B cell (primary cell): ENCODE measurements at regions of chr17 and their contacts with region 1.

Region 1: GRCh38 chr17:77444984-77445759 is 304.4 kb downstream of the SEC14L1 start:
- DNase-seq: peak; percentile 95
- ATAC-seq: peak; percentile 50
- H3K4me3 ChIP-seq: peak overlapping the region in 4 of 5 experiments; percentile 32 to 54 (median 49)
- H3K4me3 Mint-ChIP-seq: peak overlapping the region; percentile 79
- H3K27ac ChIP-seq: peak overlapping the region; percentile 96 to 100
- H3K27ac Mint-ChIP-seq: peak overlapping the region; percentile 98
- H3K4me1 ChIP-seq: peaks cover 89 to 100% of the 10 kb centered on the region in 2 donors
- H3K4me1 Mint-ChIP-seq: peaks cover 87% of the 10 kb centered on the region
- H3K27me3 ChIP-seq: no peaks in the 10 kb centered on the region
- H3K27me3 Mint-ChIP-seq: no peaks in the 10 kb centered on the region
- CTCF ChIP-seq: no peak

Region 2: DNA sequence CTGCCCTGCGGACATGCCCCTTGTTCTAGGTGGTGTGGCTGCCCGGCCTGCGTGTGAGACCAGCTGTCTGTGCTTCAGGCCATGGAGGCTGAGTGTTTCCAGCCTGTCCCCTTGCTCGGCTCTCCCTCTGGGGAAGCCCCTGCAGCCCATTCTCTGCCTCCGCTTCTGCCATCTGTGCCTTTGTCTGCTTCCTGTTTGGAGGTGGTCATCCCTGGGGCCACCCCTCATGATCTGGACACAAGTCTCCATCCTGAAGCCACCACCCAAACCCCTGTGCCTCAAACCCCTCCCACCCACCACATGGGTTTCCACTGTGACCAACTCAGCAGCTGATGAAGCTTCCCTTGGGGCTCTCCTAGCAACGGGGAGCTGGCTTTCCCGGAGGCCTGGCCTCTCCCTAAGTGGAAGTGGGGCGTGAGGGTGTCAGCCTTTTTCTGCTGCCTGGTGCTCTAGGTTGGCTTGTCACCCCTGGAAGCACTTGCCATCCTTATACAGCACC is 119.5 kb before region 1 on chr17:
- CTCF ChIA-PET with region 1: interaction called, 26 read pairs
- POLR2A ChIA-PET with region 1: interaction called, 31 read pairs
- intact Hi-C with region 1: loop called (anchors 1 kb)
- DNase-seq: no peak
- ATAC-seq: peak; percentile 10
- H3K4me3 ChIP-seq: no peak overlapping the region
- H3K4me3 Mint-ChIP-seq: peak overlapping the region; percentile 93
- H3K27ac ChIP-seq: peak overlapping the region; percentile 82 to 87
- H3K27ac Mint-ChIP-seq: peak overlapping the region; percentile 90
- H3K4me1 ChIP-seq: peaks cover 72 to 94% of the 10 kb centered on the region in 2 donors
- H3K4me1 Mint-ChIP-seq: peaks cover 82% of the 10 kb centered on the region
- H3K27me3 ChIP-seq: no peaks in the 10 kb centered on the region
- H3K27me3 Mint-ChIP-seq: no peaks in the 10 kb centered on the region
- CTCF ChIP-seq: no peak

Region 3: DNA sequence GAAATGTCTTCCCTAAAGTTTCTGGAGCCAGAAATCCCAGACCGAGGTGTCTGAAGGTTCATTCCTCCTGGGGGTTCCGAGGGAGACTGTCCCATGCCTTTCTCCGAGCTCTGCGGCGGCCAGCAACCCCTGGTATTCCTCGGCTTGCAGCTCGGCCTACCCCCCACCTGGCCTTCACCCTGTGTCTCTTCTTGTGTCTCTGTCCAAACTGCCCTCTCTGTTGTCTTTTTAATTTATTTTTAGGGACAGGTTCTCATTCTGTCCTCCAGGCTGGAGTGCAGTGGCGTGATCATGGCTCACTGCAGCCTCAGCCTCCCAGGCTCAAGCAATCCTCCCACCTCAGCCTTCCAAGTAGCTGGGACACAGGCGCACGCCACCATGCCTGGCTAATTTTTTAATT is 92.7 kb before region 1 on chr17:
- CTCF ChIA-PET with region 1: no interaction called
- POLR2A ChIA-PET with region 1: no interaction called
- intact Hi-C with region 1: no loop called
- DNase-seq: no peak
- ATAC-seq: no peak
- H3K4me3 ChIP-seq: no peak overlapping the region
- H3K4me3 Mint-ChIP-seq: no peak overlapping the region
- H3K27ac ChIP-seq: no peak overlapping the region
- H3K27ac Mint-ChIP-seq: no peak overlapping the region
- H3K4me1 ChIP-seq: no peaks in the 10 kb centered on the region
- H3K4me1 Mint-ChIP-seq: peaks cover 4% of the 10 kb centered on the region
- H3K27me3 ChIP-seq: no peaks in the 10 kb centered on the region
- H3K27me3 Mint-ChIP-seq: no peaks in the 10 kb centered on the region
- CTCF ChIP-seq: no peak

Region 4: GRCh38 chr17:77456951-77457548 is 11.9 kb after region 1 on chr17:
- CTCF ChIA-PET with region 1: interaction called, 35 read pairs
- POLR2A ChIA-PET with region 1: interaction called, 147 read pairs
- intact Hi-C with region 1: no loop called
- DNase-seq: peak; percentile 71
- ATAC-seq: no peak
- H3K4me3 ChIP-seq: peak overlapping the region in 3 of 5 experiments; percentile 15 to 41 (median 35)
- H3K4me3 Mint-ChIP-seq: peak overlapping the region; percentile 94
- H3K27ac ChIP-seq: peak overlapping the region; percentile 77 to 96
- H3K27ac Mint-ChIP-seq: peak overlapping the region; percentile 100
- H3K4me1 ChIP-seq: peaks cover 91 to 98% of the 10 kb centered on the region in 2 donors
- H3K4me1 Mint-ChIP-seq: peaks cover 92% of the 10 kb centered on the region
- H3K27me3 ChIP-seq: no peaks in the 10 kb centered on the region
- H3K27me3 Mint-ChIP-seq: no peaks in the 10 kb centered on the region
- CTCF ChIP-seq: no peak

Region 5: DNA sequence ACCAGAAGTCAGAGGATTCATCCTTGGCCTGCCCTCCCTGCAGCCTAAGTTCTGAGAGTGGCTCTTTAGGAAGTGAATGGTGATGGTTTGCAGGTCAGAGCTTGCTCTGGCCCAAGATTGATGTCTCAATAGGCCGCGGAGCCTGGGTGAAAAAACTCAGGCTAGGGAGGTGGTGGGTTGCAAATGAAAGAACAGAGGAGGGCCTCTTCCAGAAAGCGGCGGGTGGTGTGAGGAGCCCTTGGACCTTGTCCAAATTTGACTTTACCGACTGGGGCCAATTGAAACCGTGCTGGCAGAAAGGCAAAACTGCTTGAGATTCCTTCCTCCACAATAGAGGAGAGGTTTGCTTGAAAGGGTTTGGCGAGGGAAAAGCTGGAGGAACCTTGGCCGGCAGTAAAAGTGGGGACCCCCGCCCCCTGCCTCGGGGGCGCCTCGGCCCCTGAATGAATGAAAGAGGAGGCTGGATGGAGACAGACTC is 26.9 kb after region 1 on chr17:
- CTCF ChIA-PET with region 1: interaction called, 19 read pairs
- POLR2A ChIA-PET with region 1: interaction called, 45 read pairs
- intact Hi-C with region 1: no loop called
- DNase-seq: no peak
- ATAC-seq: no peak
- H3K4me3 ChIP-seq: peak overlapping the region in 4 of 5 experiments; percentile 2 to 51 (median 19)
- H3K4me3 Mint-ChIP-seq: peak overlapping the region; percentile 73
- H3K27ac ChIP-seq: peak overlapping the region; percentile 49 to 89
- H3K27ac Mint-ChIP-seq: peak overlapping the region; percentile 75
- H3K4me1 ChIP-seq: peaks cover 89 to 97% of the 10 kb centered on the region in 2 donors
- H3K4me1 Mint-ChIP-seq: peaks cover 93% of the 10 kb centered on the region
- H3K27me3 ChIP-seq: no peaks in the 10 kb centered on the region
- H3K27me3 Mint-ChIP-seq: no peaks in the 10 kb centered on the region
- CTCF ChIP-seq: no peak